Panc1 (cell line): ENCODE measurements at regions of chr15 and their contacts with region 1.

Region 1: DNA sequence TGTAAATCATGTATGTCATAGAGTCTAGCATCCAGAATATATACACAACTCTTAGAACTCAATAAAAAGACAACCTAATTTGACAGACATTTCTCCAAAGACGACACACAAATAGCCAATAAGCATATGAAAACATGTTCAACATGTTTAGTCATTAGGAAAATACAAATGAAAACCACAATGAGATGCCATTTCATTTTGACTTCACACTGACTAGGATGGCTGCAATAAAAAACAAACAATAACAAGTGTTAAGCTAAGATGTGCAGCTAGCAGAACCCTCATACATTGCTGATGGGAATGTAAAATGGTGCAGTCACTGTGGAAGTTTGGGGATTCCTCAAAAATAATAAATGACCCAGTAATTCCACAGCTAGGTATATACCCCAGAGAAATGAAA is 16.4 kb downstream of the SPG11 start:
- DNase-seq: no peak
- ATAC-seq: no peak
- H3K4me3 ChIP-seq: no peak overlapping the region
- H3K27ac ChIP-seq: no peak overlapping the region
- H3K4me1 ChIP-seq: no peaks in the 10 kb centered on the region
- H3K27me3 ChIP-seq: no peaks in the 10 kb centered on the region
- CTCF ChIP-seq: no peak

Region 2: GRCh38 chr15:44447772-44448376 is 199.2 kb before region 1 on chr15:
- CTCF ChIA-PET with region 1: no interaction called
- POLR2A ChIA-PET with region 1: no interaction called
- in situ Hi-C with region 1: no loop called
- intact Hi-C with region 1: no loop called
- DNase-seq: no peak
- ATAC-seq: peak; percentile 27
- H3K4me3 ChIP-seq: no peak overlapping the region
- H3K27ac ChIP-seq: no peak overlapping the region
- H3K4me1 ChIP-seq: no peaks in the 10 kb centered on the region; the same call in 1 of the 2 replicates
- H3K27me3 ChIP-seq: no peaks in the 10 kb centered on the region
- CTCF ChIP-seq: no peak

Region 3: GRCh38 chr15:44753345-44753744 is 106.3 kb after region 1 on chr15:
- CTCF ChIA-PET with region 1: no interaction called
- POLR2A ChIA-PET with region 1: interaction called, 12 read pairs
- in situ Hi-C with region 1: no loop called
- intact Hi-C with region 1: no loop called
- DNase-seq: no peak
- ATAC-seq: no peak
- H3K4me3 ChIP-seq: no peak overlapping the region
- H3K27ac ChIP-seq: no peak overlapping the region
- H3K4me1 ChIP-seq: no peaks in the 10 kb centered on the region
- H3K27me3 ChIP-seq: no peaks in the 10 kb centered on the region; the same call in 1 of the 2 replicates
- CTCF ChIP-seq: no peak